ENCODE measurements at regions of chr19 and their contacts with region 1.

Region 1: GRCh38 chr19:10565567-10566407 is at the start of gene KRI1:
- DNase-seq: peak; percentile 99
- H3K4me3 ChIP-seq: peak within 1 kb of the TSS; percentile 61 to 95 (median 84)
- H3K27ac ChIP-seq: peak within 1 kb of the TSS; percentile 82 to 94 (median 90)
- H3K4me1 ChIP-seq: peaks cover 0 to 46% (median 39%) of the 10 kb centered on the region in 4 donors
- H3K27me3 ChIP-seq: no peaks in the 10 kb centered on the region
- CTCF ChIP-seq: peak in 1 of 4 experiments; percentile 39
- EP300 ChIP-seq: peak in 1 of 4 donors; percentile 40
- POLR2A ChIP-seq: peak; percentile 77 to 83
- total RNA-seq, gene KRI1: 13.6 to 21.1 (median 16.1) TPM

Region 2: GRCh38 chr19:10543420-10544241 is 22.2 kb before region 1 on chr19 and contains the start of gene ATG4D:
- intact Hi-C with region 1: loop called (anchors 2 kb)
- DNase-seq: peak; percentile 85
- H3K4me3 ChIP-seq: peak within 1 kb of the TSS; percentile 74 to 97 (median 90)
- H3K27ac ChIP-seq: peak within 1 kb of the TSS; percentile 87 to 95 (median 88)
- H3K4me1 ChIP-seq: peaks cover 0 to 24% (median 21%) of the 10 kb centered on the region in 4 donors
- H3K27me3 ChIP-seq: no peaks in the 10 kb centered on the region
- CTCF ChIP-seq: no peak
- EP300 ChIP-seq: no peak
- POLR2A ChIP-seq: peak; percentile 50 to 70
- total RNA-seq, gene ATG4D: 11.4 to 25.5 (median 16.7) TPM

Region 3: DNA sequence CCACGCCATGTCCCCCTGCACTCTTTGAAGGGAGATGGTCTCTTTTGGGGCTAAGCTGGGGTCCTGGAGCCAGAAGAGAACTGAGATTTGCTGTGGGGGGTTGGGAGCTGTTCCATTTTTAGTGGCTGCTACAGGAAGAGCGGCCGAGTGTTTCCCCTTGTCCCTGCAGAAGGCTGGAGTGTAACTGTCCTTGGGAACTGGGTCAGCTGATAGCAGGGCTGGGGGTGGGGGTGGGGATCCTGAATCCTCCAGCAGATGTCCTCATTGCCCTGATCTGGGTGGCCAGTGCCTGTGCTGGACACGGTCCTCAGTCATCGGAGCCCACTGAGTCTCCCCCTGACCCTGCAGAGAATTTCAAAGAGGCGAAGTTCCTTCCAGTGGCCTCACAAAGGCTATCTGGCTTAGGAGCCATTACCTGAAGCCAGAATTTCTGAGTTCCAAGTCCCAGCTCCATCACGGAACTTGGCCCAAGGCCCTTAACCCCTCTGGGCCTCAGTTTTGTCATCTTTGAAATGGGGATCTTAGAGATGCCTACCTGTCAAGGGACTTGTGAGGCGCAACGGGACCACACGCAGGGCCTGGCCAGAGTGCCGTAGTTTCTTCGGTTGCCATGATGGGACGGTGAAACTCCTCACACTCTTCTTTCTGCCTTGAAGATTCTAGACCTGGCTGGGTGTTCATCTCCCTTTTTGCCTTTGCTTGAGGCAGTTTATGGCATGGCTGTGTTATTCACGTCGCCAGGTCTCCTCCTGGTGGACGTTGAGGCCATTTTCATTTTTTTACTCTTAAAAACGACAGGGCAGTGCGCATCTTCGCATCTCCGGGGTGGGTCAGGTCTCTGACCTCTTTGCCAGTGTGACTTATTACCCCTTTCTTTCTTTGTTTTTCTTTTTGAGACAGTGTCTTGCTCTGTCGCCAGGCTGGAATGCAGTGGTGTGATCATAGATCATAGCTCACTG is 204.0 kb after region 1 on chr19:
- intact Hi-C with region 1: no loop called
- DNase-seq: peak; percentile 73
- H3K4me3 ChIP-seq: no peak overlapping the region
- H3K27ac ChIP-seq: peak overlapping the region; percentile 27 to 72 (median 58)
- H3K4me1 ChIP-seq: peaks cover 0 to 45% (median 38%) of the 10 kb centered on the region in 4 donors
- H3K27me3 ChIP-seq: no peaks in the 10 kb centered on the region
- CTCF ChIP-seq: peak in 3 of 4 experiments; percentile 28 to 42 (median 29)
- EP300 ChIP-seq: no peak
- POLR2A ChIP-seq: no peak

Measured in sigmoid colon (tissue), 7 donors.